HAP-1 (cell line): ENCODE measurements at regions of chr10 and their contacts with region 1.

Region 1: DNA sequence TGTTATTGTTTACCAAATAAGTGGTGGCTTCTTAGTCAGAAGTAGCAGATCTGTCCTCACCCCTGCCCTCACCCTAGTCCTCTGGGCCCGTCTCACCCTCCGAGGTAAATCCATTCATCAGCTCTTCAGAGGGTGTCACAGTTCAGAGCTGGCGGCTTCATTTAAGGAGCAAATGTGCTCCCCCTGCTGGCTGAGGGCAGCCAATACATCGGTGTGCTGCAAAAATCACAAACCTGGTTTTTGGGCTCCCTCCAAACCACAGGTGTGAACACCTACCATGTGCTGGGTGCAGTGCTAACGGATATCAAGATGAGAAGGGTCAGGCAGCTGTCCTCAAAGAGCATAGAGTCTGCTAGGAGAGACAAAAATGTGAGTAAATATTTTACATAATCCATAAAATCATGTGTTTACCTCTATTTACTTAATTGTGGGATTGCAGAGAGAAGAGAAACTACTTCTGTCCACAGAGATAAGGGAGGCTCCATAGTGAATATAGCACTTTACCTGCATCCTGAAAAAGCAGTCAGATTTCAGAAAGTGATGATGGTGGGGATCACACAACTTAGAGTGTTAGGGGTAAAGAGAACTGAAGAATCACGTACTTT is 15.5 kb upstream of the CRTAC1 start:
- DNase-seq: peak; percentile 51 to 71
- H3K4me3 ChIP-seq: no peak overlapping the region
- H3K4me1 ChIP-seq: no peaks in the 10 kb centered on the region
- H3K27me3 ChIP-seq: peaks cover 25% of the 10 kb centered on the region; the same call in 1 of the 2 replicates

Region 2: DNA sequence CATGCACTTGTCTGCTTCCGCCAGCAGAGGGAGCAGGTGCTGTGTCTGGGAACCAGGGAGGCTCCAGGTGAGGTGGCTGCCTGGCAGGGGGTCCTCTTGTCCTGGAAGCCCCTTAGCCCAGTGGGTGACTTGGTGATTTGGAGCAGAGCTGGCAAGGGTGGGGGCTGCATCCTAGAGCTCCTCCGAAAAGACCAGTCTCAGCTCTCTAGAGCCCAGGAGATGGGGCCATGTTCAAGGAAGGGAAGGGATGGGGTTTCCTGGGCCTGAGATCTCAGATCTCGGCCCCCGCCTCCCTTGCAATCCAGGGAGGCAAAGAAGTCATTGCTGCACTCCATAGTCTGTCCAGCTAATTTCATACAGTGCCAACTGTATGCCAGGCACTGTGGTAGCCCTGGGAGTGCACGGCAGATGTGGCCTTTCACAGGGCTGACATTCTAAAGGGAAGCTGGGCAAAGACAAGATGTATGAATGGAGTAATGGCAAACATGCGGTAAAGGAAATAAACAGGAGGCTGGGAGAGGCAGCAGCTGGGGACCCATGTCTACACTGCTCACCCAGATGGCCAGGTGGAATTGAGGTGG is 253.7 kb before region 1 on chr10:
- in situ Hi-C with region 1: loop called (anchors 25 kb)
- DNase-seq: peak; percentile 15 to 77
- H3K4me3 ChIP-seq: no peak overlapping the region
- H3K4me1 ChIP-seq: no peaks in the 10 kb centered on the region
- H3K27me3 ChIP-seq: peaks cover 12% of the 10 kb centered on the region

Region 3: GRCh38 chr10:97914837-97915211 is 131.1 kb before region 1 on chr10:
- in situ Hi-C with region 1: loop called (anchors 10 kb)
- DNase-seq: peak; percentile 45 to 88
- H3K4me3 ChIP-seq: no peak overlapping the region
- H3K4me1 ChIP-seq: no peaks in the 10 kb centered on the region
- H3K27me3 ChIP-seq: peaks cover 22% of the 10 kb centered on the region